HCT116 (cell line): ENCODE measurements at regions of chr2 and their contacts with region 1.

Region 1: DNA sequence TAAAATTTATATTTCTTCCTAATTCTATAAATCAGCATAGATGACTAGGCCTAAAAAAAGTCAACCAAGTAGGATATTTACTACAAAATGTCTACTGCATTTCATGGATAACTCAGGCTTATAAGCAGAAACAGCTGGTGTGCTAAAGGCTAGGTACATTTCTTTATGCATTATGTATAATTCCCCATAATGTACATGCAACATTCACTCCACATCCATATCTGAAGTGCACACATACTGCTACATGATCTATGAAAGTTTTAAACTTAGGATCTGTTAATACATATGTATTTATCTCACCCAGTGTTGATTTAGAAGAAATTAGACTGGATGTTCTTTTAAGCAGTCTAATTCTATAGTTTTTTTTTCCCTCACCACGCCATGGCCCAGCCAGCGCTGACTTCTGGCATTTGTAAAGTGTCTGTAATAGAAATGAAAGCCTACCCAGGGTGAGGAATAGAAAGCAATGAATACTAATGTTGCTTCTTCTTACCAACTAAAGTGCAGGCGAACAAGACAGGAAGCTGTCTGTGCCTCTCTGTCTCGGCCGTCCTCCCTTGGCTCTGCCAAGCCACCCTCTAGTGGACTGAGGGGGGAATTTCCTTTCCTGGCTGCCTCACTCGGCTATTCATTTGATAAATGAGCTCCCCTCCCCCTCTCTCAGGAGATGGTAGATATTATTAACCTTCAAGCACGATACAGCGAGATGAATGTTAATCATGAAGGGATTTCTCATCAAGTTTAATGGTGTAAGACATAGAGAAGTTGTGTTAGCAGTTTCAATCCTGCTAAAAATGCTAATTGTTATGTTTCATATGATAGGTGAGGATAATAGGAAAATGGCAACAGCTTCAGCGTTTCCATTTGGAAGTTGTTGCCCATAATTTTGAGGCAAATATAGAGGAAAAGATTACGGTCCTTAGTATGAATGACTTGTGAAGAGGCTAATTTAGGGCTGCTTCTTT is 384.5 kb downstream of the MTX2 start:
- DNase-seq: peak; percentile 72
- ATAC-seq: peak; percentile 95
- H3K4me3 ChIP-seq: peak overlapping the region in 1 of 2 experiments; percentile 15; a peak in 1 of 4 replicates
- H3K27ac ChIP-seq: no peak overlapping the region
- H3K4me1 ChIP-seq: peaks cover 2 to 13% of the 10 kb centered on the region in 2 experiments; a peak in 2 of 4 replicates
- H3K27me3 ChIP-seq: peaks cover 9% of the 10 kb centered on the region
- CTCF ChIP-seq: peak; percentile 55 to 87 (median 81); a peak in 5 of 6 replicates
- POLR2A ChIP-seq: no peak
- RAD21 ChIP-seq: peak; percentile 51

Region 2: GRCh38 chr2:176126929-176127773 is 526.6 kb before region 1 on chr2:
- CTCF ChIA-PET with region 1: interaction called, 36 read pairs
- POLR2A ChIA-PET with region 1: interaction called, 5 read pairs
- RAD21 ChIA-PET with region 1: interaction called, 4 read pairs
- intact Hi-C with region 1: loop called (anchors 2 kb)
- DNase-seq: no peak
- ATAC-seq: no peak
- H3K4me3 ChIP-seq: peak overlapping the region; percentile 9; a peak in 2 of 4 replicates
- H3K27ac ChIP-seq: no peak overlapping the region
- H3K4me1 ChIP-seq: peaks cover 6 to 17% of the 10 kb centered on the region in 2 experiments; a peak in 3 of 4 replicates
- H3K27me3 ChIP-seq: no peaks in the 10 kb centered on the region
- CTCF ChIP-seq: peak; percentile 64 to 88 (median 87)
- POLR2A ChIP-seq: no peak
- RAD21 ChIP-seq: peak; percentile 93

Region 3: GRCh38 chr2:176454893-176455811 is 198.6 kb before region 1 on chr2:
- CTCF ChIA-PET with region 1: interaction called, 22 read pairs
- POLR2A ChIA-PET with region 1: no interaction called
- RAD21 ChIA-PET with region 1: interaction called in 1 of 2 experiments, 3 read pairs
- intact Hi-C with region 1: no loop called
- DNase-seq: peak; percentile 45
- ATAC-seq: peak; percentile 90
- H3K4me3 ChIP-seq: no peak overlapping the region
- H3K27ac ChIP-seq: no peak overlapping the region
- H3K4me1 ChIP-seq: 0 out of 4 replicates have a peak, but pooled peaks cover 0 to 3% of the 10 kb centered on the region in 2 experiments
- H3K27me3 ChIP-seq: no peaks in the 10 kb centered on the region
- CTCF ChIP-seq: peak; percentile 85 to 91 (median 85)
- POLR2A ChIP-seq: no peak
- RAD21 ChIP-seq: peak; percentile 86

Region 4: GRCh38 chr2:176638167-176639015 is 15.4 kb before region 1 on chr2:
- CTCF ChIA-PET with region 1: interaction called, 14 read pairs
- POLR2A ChIA-PET with region 1: no interaction called
- RAD21 ChIA-PET with region 1: no interaction called
- intact Hi-C with region 1: no loop called
- DNase-seq: no peak
- ATAC-seq: peak; percentile 91
- H3K4me3 ChIP-seq: peak overlapping the region; percentile 10 to 31; a peak in 3 of 4 replicates
- H3K27ac ChIP-seq: no peak overlapping the region
- H3K4me1 ChIP-seq: peaks cover 0 to 9% of the 10 kb centered on the region in 2 experiments; a peak in 1 of 4 replicates
- H3K27me3 ChIP-seq: no peaks in the 10 kb centered on the region
- CTCF ChIP-seq: peak; percentile 53 to 89 (median 54)
- POLR2A ChIP-seq: no peak
- RAD21 ChIP-seq: peak; percentile 84

Region 5: GRCh38 chr2:176725873-176726645 is 72.3 kb after region 1 on chr2:
- CTCF ChIA-PET with region 1: no interaction called
- POLR2A ChIA-PET with region 1: no interaction called
- RAD21 ChIA-PET with region 1: no interaction called
- intact Hi-C with region 1: no loop called
- DNase-seq: no peak
- ATAC-seq: no peak
- H3K4me3 ChIP-seq: no peak overlapping the region
- H3K27ac ChIP-seq: no peak overlapping the region
- H3K4me1 ChIP-seq: peaks cover 0 to 2% of the 10 kb centered on the region in 2 experiments; a peak in 1 of 4 replicates
- H3K27me3 ChIP-seq: peaks cover 41% of the 10 kb centered on the region
- CTCF ChIP-seq: no peak
- POLR2A ChIP-seq: no peak
- RAD21 ChIP-seq: no peak

Region 6: GRCh38 chr2:176814306-176815052 is 160.7 kb after region 1 on chr2:
- CTCF ChIA-PET with region 1: interaction called, 14 read pairs
- POLR2A ChIA-PET with region 1: no interaction called
- RAD21 ChIA-PET with region 1: interaction called in 1 of 2 experiments, 3 read pairs
- intact Hi-C with region 1: no loop called
- DNase-seq: peak; percentile 12
- ATAC-seq: peak; percentile 69
- H3K4me3 ChIP-seq: no peak overlapping the region
- H3K27ac ChIP-seq: no peak overlapping the region
- H3K4me1 ChIP-seq: no peaks in the 10 kb centered on the region
- H3K27me3 ChIP-seq: 0 out of 2 replicates have a peak, but pooled peaks cover 9% of the 10 kb centered on the region
- CTCF ChIP-seq: peak; percentile 25 to 61 (median 40); a peak in 3 of 6 replicates
- POLR2A ChIP-seq: no peak
- RAD21 ChIP-seq: peak; percentile 70

Region 7: DNA sequence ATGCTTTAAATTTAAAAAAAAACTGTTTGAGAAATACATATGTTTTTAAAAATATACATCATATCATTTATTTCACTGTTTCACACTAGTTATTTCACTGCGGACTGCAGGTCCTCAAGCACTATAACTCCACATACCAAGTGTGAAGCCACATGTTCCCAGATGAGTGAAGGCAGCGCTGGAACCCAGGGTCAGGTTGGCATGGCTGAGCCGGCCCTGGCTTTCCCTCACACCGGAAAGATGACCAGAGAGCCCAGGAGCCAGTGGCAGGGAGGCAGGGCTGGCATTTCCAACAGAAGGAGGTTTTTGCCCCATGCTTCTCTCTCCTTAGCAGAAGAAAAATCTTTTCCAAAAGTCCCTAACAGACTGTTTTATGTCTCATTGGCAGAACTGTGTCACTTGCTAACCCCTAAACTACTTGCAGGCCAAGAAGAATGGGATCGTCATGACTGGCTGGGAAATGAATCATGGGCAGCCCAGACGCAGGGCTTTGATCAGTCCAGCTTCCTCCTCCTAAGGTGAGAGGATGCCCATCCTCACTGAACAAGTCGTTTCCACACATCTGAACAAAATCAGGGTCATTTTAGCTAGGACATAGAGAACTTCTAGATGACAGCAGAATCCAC is 271.3 kb after region 1 on chr2:
- CTCF ChIA-PET with region 1: no interaction called
- POLR2A ChIA-PET with region 1: no interaction called
- RAD21 ChIA-PET with region 1: no interaction called
- intact Hi-C with region 1: no loop called
- DNase-seq: no peak
- ATAC-seq: peak; percentile 64
- H3K4me3 ChIP-seq: no peak overlapping the region
- H3K27ac ChIP-seq: no peak overlapping the region
- H3K4me1 ChIP-seq: peaks cover 0 to 5% of the 10 kb centered on the region in 2 experiments; a peak in 1 of 4 replicates
- H3K27me3 ChIP-seq: no peaks in the 10 kb centered on the region
- CTCF ChIP-seq: no peak
- POLR2A ChIP-seq: no peak
- RAD21 ChIP-seq: no peak

Region 8: DNA sequence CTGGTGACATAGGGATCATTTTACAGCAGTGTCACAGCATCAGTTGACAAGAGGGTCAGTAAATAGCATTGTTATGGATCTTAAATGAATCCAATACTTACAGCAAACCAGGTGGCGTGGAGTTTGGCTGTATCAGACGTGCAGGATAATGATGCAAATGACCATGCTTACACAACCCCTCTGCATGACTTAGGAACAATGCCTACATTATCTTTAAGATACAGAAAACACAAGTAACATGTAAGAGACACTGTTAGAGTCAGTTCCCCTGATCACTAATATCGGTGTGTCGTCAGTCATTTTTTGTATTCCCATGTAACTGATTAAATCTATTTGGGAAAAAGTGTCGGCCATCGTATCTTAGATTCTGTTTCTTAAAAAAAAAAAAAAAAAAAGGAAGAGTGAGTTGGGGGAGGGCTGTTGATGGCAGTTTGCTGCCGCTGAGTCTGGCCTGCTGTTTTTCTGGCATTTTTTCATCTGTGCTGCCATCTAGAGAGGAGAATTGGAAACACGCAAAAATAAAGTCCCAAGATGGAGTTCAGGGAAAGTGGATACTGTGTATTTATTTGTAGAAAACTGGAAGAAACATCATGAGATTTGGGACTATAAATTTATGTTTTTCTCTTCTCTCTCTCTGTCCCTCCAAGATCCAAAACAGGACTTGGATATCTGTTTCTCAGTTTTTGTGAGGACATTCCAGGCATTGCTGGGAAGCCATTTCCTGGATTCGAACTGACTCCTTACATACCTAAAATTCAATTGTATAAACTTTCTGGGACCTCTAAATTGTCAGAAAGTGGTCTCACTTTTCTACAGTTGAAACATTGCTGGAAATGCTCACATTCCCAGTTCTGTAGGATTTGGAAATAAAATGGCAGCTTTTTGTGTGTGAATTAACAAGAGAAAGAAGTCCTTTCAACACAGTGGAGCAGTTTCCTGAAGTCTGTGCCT is 678.6 kb after region 1 on chr2:
- CTCF ChIA-PET with region 1: no interaction called
- POLR2A ChIA-PET with region 1: no interaction called
- RAD21 ChIA-PET with region 1: no interaction called
- intact Hi-C with region 1: loop called (anchors 10 kb)
- DNase-seq: peak; percentile 39
- ATAC-seq: peak; percentile 78
- H3K4me3 ChIP-seq: no peak overlapping the region
- H3K27ac ChIP-seq: no peak overlapping the region
- H3K4me1 ChIP-seq: peaks cover 8 to 21% of the 10 kb centered on the region in 2 experiments
- H3K27me3 ChIP-seq: no peaks in the 10 kb centered on the region
- CTCF ChIP-seq: peak; percentile 57 to 82 (median 64); a peak in 5 of 6 replicates
- POLR2A ChIP-seq: no peak
- RAD21 ChIP-seq: peak; percentile 89